ENCODE measurements at regions of chr17 and their contacts with region 1.

Region 1: DNA sequence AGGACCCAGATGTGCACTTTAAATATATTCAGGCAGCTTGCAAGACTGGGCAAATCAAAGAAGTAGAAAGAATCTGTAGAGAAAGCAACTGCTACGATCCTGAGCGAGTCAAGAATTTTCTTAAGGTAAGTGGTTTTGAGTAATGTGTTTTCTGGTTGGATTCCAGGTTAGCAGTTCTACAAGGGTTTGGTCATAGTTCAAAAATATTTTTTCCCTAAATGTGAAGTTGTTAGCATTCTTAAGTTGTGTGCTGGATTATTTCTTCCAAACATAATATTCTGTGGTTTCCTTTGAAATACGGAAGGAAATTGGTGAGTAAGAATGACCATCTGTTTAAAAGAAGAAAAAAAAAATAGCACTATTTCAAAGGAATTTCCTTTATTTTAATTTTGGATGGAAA is 38.4 kb downstream of the PTRH2 start:
- DNase-seq: no peak
- ATAC-seq: no peak

Region 2: DNA sequence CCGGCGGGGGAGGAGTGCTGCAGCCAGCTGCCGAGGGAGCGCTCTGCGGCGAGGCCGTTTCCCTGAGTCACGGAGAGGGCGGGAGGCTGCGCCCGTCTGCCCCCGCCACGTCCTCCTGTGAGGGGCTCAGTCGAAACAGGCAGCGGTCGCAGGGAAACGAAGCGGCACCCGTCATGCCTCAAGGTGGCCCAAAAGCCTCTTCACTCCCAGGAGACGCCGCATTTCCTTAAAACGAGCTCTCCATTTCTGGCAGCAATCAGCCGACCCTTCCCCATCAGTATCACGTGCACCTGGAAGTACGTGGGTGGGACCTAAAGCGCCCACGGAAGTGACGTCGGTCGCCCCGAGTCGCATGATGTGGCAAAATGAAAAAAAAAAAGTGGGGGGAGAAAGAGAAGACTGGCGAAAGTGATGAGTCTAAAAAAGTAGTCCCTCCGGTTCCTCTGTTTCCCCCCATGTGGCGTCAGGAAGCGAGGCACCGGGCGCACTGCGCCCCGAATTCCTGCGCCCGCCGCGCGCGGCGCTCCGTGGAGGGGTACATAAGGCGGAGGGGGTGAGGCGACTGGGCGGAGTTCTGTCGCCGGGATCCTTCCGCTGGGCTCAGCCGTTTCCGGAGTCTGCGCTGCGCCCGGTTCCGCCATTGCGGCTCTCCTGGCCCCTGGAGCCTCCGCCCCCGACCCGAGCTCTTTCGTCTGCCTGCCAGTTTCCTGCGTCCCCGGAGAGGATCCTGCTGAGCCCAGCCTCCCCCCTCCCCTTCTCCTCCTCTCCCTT is 49.3 kb before region 1 on chr17 and contains the start of gene CLTC:
- intact Hi-C with region 1: no loop called
- DNase-seq: peak; percentile 96
- ATAC-seq: peak; percentile 94
- total RNA-seq, gene CLTC: 136 TPM

Region 3: GRCh38 chr17:59941131-59941530 is 272.3 kb after region 1 on chr17:
- intact Hi-C with region 1: loop called (anchors 10 kb)
- DNase-seq: no peak
- ATAC-seq: no peak

Measured in Right ventricle myocardium inferior (tissue), 1 donor.